ENCODE measurements at regions of chr1 and their contacts with region 1.

Region 1: GRCh38 chr1:201750939-201751338 is 78.0 kb upstream of the IPO9 start:
- DNase-seq: no peak

Region 2: GRCh38 chr1:201714542-201715276 is 36.2 kb before region 1 on chr1:
- in situ Hi-C with region 1: loop called (anchors 5 kb)
- DNase-seq: peak; percentile 98